Right cardiac atrium (tissue), 5 donors: ENCODE measurements at regions of chr15 and their contacts with region 1.

Region 1: GRCh38 chr15:36863570-36863969 is 236.8 kb downstream of the MEIS2 start:
- DNase-seq: no peak
- ATAC-seq: no peak
- H3K4me3 ChIP-seq: no peak overlapping the region
- H3K27ac ChIP-seq: no peak overlapping the region
- H3K4me1 ChIP-seq: no peaks in the 10 kb centered on the region
- H3K27me3 ChIP-seq: no peaks in the 10 kb centered on the region

Region 2: DNA sequence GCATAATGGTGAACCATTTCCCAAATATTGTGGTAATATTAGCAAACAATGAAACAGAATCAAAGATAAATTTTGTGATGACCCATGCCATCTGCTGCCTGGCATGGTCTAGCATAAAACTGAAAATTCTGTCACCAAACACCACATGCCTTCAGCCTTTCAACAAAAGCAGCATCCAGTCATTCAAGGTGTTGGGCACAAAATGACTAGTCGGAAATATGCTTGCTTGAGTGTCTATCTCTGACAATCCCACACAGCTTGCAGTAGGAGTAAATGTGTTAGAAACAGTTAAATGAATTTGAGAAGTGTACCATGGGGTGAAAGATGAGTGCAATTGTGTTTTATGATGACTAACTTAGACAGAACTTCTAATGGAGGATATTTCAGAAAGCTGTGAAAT is 345.8 kb before region 1 on chr15:
- intact Hi-C with region 1: loop called in 1 of 4 experiments (anchors 10 kb)
- DNase-seq: no peak
- ATAC-seq: no peak
- H3K4me3 ChIP-seq: no peak overlapping the region
- H3K27ac ChIP-seq: no peak overlapping the region
- H3K4me1 ChIP-seq: no peaks in the 10 kb centered on the region
- H3K27me3 ChIP-seq: no peaks in the 10 kb centered on the region